ENCODE measurements at regions of chr17 and their contacts with region 1.

Region 1: DNA sequence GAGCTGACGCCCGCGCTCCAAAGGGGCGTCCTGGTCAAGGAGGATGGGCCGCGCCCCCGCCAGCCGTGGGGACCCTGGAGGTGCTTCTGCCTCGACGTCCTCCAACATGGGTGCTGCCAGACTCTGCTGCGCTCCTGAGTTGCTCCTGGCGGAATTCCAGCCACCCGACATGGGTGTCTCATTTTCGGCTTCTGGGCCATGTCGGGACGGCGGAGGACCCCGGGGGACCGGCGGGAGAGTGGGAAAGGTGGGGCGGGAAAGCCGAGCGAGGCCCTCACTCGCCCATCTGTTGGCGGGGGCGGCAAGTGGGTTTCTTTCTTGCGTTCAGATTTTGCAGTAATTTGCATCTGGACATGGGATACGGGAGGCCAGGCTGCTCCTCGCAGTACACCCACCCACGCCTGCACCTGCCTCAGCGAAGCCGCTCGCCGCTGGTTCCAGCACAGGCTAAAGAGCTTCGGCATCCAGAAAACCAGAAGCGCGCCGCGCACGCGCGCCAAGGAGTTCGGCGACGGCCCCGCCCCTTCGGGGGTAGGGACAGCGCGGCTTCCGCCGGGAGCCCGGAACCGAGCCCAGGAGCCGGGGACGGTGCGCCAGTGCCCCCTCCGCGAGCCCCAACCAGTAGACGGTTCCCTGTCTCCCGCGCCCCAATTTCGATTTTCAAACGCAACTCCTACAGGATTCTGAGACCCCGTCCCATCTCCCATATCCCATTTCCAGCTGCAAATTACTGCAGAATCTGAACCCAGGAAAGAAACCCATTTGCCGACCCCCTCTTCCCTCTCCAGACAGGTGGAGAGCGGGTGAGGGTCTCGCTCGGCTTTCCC is at the start of gene ARMC7:
- DNase-seq: peak; percentile 70 to 95 (median 89)

Region 2: GRCh38 chr17:75069783-75070182 is 39.8 kb before region 1 on chr17:
- intact Hi-C with region 1: loop called (anchors 5 kb)
- DNase-seq: peak in 6 of 42 donors; percentile 21 to 51 (median 34)

Region 3: GRCh38 chr17:75205037-75205792 is 95.6 kb after region 1 on chr17 and contains the start of gene NUP85:
- intact Hi-C with region 1: loop called (anchors 10 kb)
- DNase-seq: peak; percentile 80 to 97 (median 93)